AG04450 (cell line): ENCODE measurements at regions of chr17 and their contacts with region 1.

Region 1: DNA sequence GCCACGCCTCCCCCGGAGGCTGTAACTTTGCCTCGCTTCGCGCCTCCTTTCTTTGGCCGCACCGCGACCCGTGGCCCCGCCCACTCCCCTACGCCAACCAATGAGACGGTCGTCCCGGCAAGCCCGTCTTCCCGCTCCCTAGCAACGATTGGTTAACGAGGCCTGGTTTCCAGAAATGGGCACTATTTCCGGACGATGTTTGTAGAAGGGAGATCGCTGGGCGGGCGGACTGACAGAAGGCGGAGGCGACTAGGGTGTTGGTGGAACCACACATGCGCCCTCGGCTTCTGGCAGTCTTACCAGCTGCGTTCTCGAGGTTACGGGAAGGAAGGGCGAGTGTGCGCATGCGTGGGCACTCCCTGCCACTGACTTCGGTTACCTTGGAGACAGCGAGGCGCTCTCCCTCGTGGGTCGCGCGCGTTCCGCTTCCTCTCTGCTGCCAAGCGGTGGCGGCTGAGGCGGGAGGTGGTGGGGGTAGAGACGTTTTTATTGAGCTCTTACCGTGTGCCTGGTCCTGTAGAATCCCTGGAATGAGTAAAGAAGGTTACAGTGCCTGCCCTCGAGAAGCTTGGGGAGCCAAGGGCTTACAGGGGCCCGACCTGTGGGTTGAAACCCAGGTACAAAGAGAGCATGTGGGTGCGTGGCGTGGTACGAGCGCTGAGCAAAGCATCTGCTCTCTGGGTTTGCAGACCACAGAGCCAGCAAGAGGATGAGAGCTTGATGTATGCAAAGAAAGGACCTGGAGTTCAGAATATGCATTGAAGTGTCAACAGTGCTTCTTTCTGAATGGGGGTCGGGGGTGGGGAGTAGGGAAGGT is 500 bp upstream of the MAP3K14 start:
- DNase-seq: peak; percentile 100
- H3K4me3 ChIP-seq: peak overlapping the region; percentile 61
- H3K27ac ChIP-seq: peak overlapping the region; percentile 84
- H3K27me3 ChIP-seq: no peaks in the 10 kb centered on the region
- CTCF ChIP-seq: no peak

Region 2: DNA sequence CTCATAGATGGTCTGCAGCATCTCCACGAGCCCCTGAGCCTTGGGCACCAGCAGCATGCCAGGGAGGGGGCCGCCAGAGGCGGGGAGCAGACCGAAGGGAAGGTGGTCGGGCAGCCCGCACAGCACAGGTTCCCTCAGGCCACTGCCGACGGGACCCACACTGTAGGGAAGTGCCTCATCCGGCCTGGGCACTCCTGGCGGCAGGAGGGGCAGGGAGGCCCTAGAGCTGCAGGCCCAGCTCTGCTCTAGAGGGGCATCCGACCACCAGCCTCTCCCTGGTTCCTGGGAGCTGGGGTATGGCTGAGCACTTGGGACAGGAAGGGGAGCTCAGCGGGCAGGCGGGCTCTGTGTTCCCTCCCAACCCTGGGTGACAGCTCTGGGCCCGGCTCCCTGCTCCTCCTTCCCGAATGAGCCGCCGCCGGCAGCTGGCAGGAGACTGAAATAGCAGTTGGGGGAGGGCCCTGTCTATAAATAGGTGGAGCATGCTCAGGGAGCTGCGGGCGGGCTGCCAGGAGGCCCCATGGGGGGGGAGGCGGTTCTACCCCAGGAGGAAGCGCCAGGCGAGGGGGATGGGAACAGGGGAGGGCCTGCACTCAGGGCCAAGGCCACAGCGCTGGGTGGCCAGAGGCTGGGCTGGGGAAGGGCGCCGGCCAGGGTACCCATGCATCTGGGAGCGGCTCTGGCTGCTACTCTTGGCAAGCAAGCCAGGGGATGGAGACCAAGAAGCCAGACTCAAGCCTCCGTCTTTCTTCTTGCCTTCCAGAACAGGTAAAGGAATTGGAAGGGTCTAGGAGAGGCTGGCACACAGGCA is 1206.3 kb before region 1 on chr17:
- CTCF ChIA-PET with region 1: no interaction called
- POLR2A ChIA-PET with region 1: no interaction called
- DNase-seq: no peak
- H3K4me3 ChIP-seq: peak overlapping the region; percentile 57
- H3K27ac ChIP-seq: peak overlapping the region; percentile 47
- H3K27me3 ChIP-seq: no peaks in the 10 kb centered on the region
- CTCF ChIP-seq: no peak; the same call in 1 of the 2 replicates

Region 3: GRCh38 chr17:45190503-45191255 is 126.6 kb before region 1 on chr17:
- CTCF ChIA-PET with region 1: no interaction called
- POLR2A ChIA-PET with region 1: no interaction called
- DNase-seq: no peak
- H3K4me3 ChIP-seq: no peak overlapping the region
- H3K27ac ChIP-seq: no peak overlapping the region
- H3K27me3 ChIP-seq: peaks cover 2% of the 10 kb centered on the region
- CTCF ChIP-seq: no peak

Region 4: DNA sequence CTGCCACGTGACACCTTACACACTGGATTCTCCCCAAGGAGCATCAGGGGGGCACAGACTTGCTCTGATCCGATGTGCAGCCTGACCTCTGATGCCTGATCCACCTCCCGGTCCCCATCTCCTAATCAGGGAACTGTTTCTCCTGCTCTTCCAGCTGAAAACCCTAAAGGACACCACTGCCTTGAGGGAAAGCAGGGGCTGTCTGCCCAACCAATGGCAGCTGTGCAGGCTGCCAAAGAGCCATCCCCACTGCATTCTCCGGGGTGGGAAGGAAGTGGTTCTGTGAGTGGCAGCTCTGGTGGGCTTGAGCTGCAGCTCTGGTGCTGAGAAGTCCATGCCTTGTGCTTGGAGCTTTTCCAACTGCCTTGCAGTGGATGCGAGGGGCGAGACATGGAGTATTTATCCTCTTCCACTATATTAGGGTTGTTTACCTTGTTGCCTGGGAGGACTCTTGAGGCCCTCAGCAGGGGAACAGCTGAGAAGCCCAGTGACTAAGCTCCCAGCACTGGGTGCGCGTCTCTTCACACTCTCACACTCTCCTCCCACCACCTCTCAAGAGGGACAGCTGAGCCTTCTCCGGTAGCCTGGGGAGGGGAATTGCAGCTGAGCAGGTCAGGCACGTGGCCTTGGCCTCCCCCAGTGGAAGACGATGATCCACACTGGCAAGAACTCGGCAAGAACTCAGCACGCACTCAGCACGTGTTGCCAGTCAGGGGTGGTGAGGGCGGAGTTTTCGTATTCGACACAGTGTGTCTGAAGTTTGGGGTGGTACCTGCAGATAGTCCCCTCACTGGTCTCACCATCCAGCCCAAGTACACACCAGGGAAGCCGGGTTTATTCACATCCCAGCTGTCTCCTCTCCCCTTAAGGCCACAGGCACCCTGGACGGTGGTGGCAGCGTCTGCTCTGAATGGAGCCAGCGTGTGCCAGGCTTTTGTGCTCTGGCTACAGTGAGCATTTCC is 34.4 kb before region 1 on chr17:
- CTCF ChIA-PET with region 1: interaction called, 29 read pairs
- POLR2A ChIA-PET with region 1: interaction called, 13 read pairs
- DNase-seq: peak; percentile 62
- H3K4me3 ChIP-seq: no peak overlapping the region
- H3K27ac ChIP-seq: peak overlapping the region; percentile 80
- H3K27me3 ChIP-seq: no peaks in the 10 kb centered on the region
- CTCF ChIP-seq: no peak

Region 5: GRCh38 chr17:45293413-45294211 is 23.7 kb before region 1 on chr17:
- CTCF ChIA-PET with region 1: interaction called, 3 read pairs
- POLR2A ChIA-PET with region 1: interaction called, 14 read pairs
- DNase-seq: peak; percentile 65
- H3K4me3 ChIP-seq: no peak overlapping the region
- H3K27ac ChIP-seq: peak overlapping the region; percentile 87
- H3K27me3 ChIP-seq: no peaks in the 10 kb centered on the region
- CTCF ChIP-seq: no peak; the same call in 1 of the 2 replicates

Region 6: GRCh38 chr17:45341533-45342158 is 24.3 kb after region 1 on chr17:
- CTCF ChIA-PET with region 1: interaction called, 3 read pairs
- POLR2A ChIA-PET with region 1: interaction called, 16 read pairs
- DNase-seq: peak; percentile 63
- H3K4me3 ChIP-seq: peak overlapping the region; percentile 31
- H3K27ac ChIP-seq: peak overlapping the region; percentile 73
- H3K27me3 ChIP-seq: no peaks in the 10 kb centered on the region
- CTCF ChIP-seq: no peak

Region 7: DNA sequence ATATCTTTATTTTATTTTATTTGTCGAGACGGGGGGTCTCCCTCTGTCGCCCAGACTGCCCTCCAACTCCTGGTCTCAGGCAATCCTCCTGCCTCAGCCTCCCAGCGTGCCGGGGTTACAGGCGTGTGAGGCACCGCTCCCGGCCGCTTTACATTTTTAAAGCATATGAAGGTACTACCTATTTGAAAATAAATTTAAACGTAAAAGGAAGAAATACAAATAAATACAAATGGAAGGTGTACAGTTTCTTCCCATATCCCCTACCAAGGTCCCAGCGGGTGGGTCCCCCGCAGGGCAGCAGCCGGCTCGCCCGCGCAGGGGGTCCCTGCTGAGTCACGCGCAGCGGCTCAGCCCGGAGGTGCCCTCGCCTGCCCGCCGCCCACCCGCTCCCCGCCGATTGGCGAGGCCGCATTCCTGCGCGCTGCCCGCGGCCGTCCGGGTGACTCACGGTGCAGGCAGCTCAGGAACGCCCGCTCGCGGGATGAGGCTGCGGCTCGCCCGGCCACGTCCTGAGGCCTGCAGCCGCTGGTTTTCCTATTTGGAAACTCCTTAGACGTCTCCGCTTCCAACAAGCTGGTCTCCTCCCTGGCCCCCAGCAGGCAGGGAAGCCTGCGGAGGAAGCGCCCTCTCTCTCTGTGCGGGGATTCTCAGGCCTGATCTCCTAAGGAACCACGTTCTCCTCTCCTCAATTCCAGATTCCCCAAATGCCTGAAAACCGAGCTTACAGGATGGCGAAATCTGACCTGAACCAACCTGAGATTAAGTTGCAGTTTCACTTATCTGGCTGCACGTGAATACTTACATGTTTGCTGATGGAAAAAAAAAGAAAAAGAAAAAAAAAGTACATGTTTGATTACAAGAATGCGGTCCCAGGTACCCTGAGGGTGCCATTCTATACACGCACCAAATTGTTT is 54.4 kb after region 1 on chr17:
- CTCF ChIA-PET with region 1: interaction called, 3 read pairs
- POLR2A ChIA-PET with region 1: interaction called, 55 read pairs
- DNase-seq: peak; percentile 93
- H3K4me3 ChIP-seq: peak overlapping the region; percentile 29; the same call in 1 of the 2 replicates
- H3K27ac ChIP-seq: peak overlapping the region; percentile 100
- H3K27me3 ChIP-seq: no peaks in the 10 kb centered on the region
- CTCF ChIP-seq: peak; percentile 16

Region 8: GRCh38 chr17:45385331-45385997 is 68.1 kb after region 1 on chr17:
- CTCF ChIA-PET with region 1: interaction called, 8 read pairs
- POLR2A ChIA-PET with region 1: interaction called, 12 read pairs
- DNase-seq: peak; percentile 53
- H3K4me3 ChIP-seq: no peak overlapping the region
- H3K27ac ChIP-seq: no peak overlapping the region
- H3K27me3 ChIP-seq: no peaks in the 10 kb centered on the region
- CTCF ChIP-seq: peak; percentile 99